Tibial artery (tissue), 4 donors: ENCODE measurements at regions of chr18 and their contacts with region 1.

Region 1: GRCh38 chr18:11553098-11553940 is 56.1 kb upstream of the SLC35G4 start:
- DNase-seq: no peak
- H3K4me3 ChIP-seq: no peak overlapping the region
- H3K27ac ChIP-seq: no peak overlapping the region
- H3K4me1 ChIP-seq: no peaks in the 10 kb centered on the region
- H3K27me3 ChIP-seq: peaks cover 0 to 3% of the 10 kb centered on the region in 2 donors
- CTCF ChIP-seq: peak; percentile 77 to 89

Region 2: GRCh38 chr18:10851824-10852319 is 701.4 kb before region 1 on chr18:
- intact Hi-C with region 1: loop called (anchors 2 kb)
- DNase-seq: no peak
- H3K4me3 ChIP-seq: no peak overlapping the region
- H3K27ac ChIP-seq: no peak overlapping the region
- H3K4me1 ChIP-seq: no peaks in the 10 kb centered on the region
- H3K27me3 ChIP-seq: no peaks in the 10 kb centered on the region
- CTCF ChIP-seq: peak; percentile 80 to 84